A673 (cell line): ENCODE measurements at regions of chr3 and their contacts with region 1.

Region 1: GRCh38 chr3:122258757-122259371 is 66.2 kb upstream of the CSTA start:
- DNase-seq: peak; percentile 68
- H3K4me3 ChIP-seq: no peak overlapping the region
- H3K27ac ChIP-seq: no peak overlapping the region
- H3K4me1 ChIP-seq: no peaks in the 10 kb centered on the region
- H3K27me3 ChIP-seq: peaks cover 39% of the 10 kb centered on the region
- CTCF ChIP-seq: peak; percentile 67

Region 2: GRCh38 chr3:121493431-121493830 is 765.4 kb before region 1 on chr3:
- CTCF ChIA-PET with region 1: no interaction called
- POLR2A ChIA-PET with region 1: interaction called, 16 read pairs
- intact Hi-C with region 1: no loop called
- DNase-seq: peak; percentile 10
- H3K4me3 ChIP-seq: no peak overlapping the region
- H3K27ac ChIP-seq: no peak overlapping the region
- H3K4me1 ChIP-seq: no peaks in the 10 kb centered on the region
- H3K27me3 ChIP-seq: no peaks in the 10 kb centered on the region
- CTCF ChIP-seq: no peak

Region 3: GRCh38 chr3:121989943-121990342 is 268.9 kb before region 1 on chr3:
- CTCF ChIA-PET with region 1: interaction called, 10 read pairs
- POLR2A ChIA-PET with region 1: no interaction called
- intact Hi-C with region 1: no loop called
- DNase-seq: no peak
- H3K4me3 ChIP-seq: no peak overlapping the region
- H3K27ac ChIP-seq: no peak overlapping the region
- H3K4me1 ChIP-seq: no peaks in the 10 kb centered on the region
- H3K27me3 ChIP-seq: no peaks in the 10 kb centered on the region
- CTCF ChIP-seq: no peak